WTC11 (cell line): ENCODE measurements at regions of chr16 and their contacts with region 1.

Region 1: DNA sequence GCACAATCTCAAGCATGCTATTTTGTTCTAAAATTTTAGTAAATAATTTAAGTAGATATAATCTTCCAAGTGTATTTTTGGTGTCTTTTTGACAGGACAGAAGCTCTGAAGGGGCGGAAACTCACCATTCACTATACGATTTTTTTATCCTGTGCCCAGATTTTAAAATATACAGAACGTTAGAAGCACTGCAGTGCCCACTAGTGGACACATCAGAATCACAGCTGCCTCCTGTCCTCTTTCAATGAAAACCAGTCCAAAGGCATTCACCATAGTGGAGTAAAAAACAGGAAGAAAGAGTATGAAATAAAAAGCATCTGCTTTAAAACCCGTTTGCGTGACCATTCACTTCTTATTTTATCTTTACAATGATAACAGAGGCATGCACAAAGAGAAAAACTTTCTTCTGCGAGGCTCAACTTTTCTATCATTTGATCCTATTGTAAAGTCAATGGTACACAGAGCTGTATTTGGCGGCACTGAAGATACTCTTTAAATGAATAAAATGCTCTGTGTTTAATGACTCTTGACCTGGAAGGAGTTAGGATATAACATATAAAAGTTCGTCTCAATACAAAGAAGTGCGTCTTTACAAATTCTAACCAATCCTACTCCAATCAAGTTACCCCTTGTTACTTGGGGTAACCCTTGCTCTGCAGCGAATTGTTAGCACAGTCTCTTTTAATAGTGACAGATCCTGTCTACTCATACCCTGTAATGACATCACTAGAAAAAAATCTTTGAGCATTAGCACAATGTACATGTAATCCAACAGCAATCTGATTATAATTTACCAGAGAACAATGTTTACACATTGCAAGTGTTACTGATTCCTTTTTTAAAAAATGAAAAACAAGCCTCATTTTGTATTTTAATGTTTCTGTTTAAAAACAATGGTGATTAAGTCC is 339.8 kb upstream of the PSMD7 start:
- DNase-seq: peak; percentile 73
- ATAC-seq: peak; percentile 67
- H3K4me3 Mint-ChIP-seq: no peak overlapping the region
- H3K27ac Mint-ChIP-seq: no peak overlapping the region
- H3K4me1 Mint-ChIP-seq: no peaks in the 10 kb centered on the region; the same call in 1 of the 2 replicates
- H3K27me3 Mint-ChIP-seq: no peaks in the 10 kb centered on the region; the same call in 1 of the 2 replicates
- CTCF ChIP-seq: peak; percentile 42; the same call in 1 of the 2 replicates

Region 2: DNA sequence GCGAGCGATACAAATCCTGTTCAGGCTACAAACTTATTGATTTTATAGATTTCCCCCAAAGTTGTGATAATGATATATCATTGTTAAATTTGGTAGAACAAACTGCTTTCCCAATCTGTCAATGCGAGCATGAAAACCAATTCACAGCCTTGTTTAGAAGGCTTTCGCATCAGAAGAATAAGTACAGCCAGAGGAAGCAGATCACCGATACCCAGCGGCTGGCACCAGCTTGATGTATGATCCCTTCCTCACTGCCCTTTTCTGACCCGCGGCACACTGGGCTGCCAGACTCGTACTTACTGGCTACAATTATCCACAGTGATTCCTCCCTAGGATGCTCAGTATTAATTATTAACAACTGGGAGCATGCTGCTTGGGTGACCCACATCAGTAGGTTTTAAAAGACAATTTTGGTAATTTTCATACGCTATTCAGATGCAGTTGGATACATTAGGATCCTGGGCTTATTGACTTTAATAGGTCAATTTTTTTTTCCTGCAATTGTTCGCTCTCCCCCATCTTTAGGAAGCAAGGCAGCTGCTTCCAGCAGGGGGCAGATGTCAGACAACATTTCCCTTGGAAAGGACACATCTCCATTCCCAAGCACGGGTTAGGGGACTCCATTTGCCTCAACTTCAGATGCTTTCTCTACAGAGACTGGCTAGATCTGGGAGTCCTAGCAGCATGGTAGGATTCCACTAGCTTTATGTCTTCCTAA is 242.9 kb before region 1 on chr16:
- CTCF ChIA-PET with region 1: interaction called, 10 read pairs
- POLR2A ChIA-PET with region 1: no interaction called
- DNase-seq: peak; percentile 69
- ATAC-seq: peak; percentile 58
- H3K4me3 Mint-ChIP-seq: no peak overlapping the region
- H3K27ac Mint-ChIP-seq: peak overlapping the region; percentile 61
- H3K4me1 Mint-ChIP-seq: peaks cover 71% of the 10 kb centered on the region
- H3K27me3 Mint-ChIP-seq: no peaks in the 10 kb centered on the region
- CTCF ChIP-seq: peak; percentile 56

Region 3: GRCh38 chr16:73743665-73744496 is 213.0 kb before region 1 on chr16:
- CTCF ChIA-PET with region 1: interaction called, 15 read pairs
- POLR2A ChIA-PET with region 1: no interaction called
- DNase-seq: peak; percentile 52
- ATAC-seq: peak; percentile 50
- H3K4me3 Mint-ChIP-seq: no peak overlapping the region
- H3K27ac Mint-ChIP-seq: no peak overlapping the region; the same call in 1 of the 2 replicates
- H3K4me1 Mint-ChIP-seq: peaks cover 12% of the 10 kb centered on the region
- H3K27me3 Mint-ChIP-seq: no peaks in the 10 kb centered on the region
- CTCF ChIP-seq: peak; percentile 36; the same call in 1 of the 2 replicates

Region 4: GRCh38 chr16:73846356-73846755 is 110.5 kb before region 1 on chr16:
- CTCF ChIA-PET with region 1: interaction called, 13 read pairs
- POLR2A ChIA-PET with region 1: no interaction called
- DNase-seq: peak; percentile 52
- ATAC-seq: peak; percentile 69; the same call in 1 of the 2 replicates
- H3K4me3 Mint-ChIP-seq: no peak overlapping the region
- H3K27ac Mint-ChIP-seq: no peak overlapping the region
- H3K4me1 Mint-ChIP-seq: peaks cover 14% of the 10 kb centered on the region
- H3K27me3 Mint-ChIP-seq: no peaks in the 10 kb centered on the region
- CTCF ChIP-seq: no peak

Region 5: GRCh38 chr16:73864868-73865267 is 92.0 kb before region 1 on chr16:
- CTCF ChIA-PET with region 1: no interaction called
- POLR2A ChIA-PET with region 1: no interaction called
- DNase-seq: no peak
- ATAC-seq: no peak
- H3K4me3 Mint-ChIP-seq: no peak overlapping the region
- H3K27ac Mint-ChIP-seq: no peak overlapping the region
- H3K4me1 Mint-ChIP-seq: peaks cover 7% of the 10 kb centered on the region
- H3K27me3 Mint-ChIP-seq: no peaks in the 10 kb centered on the region; the same call in 1 of the 2 replicates
- CTCF ChIP-seq: no peak

Region 6: DNA sequence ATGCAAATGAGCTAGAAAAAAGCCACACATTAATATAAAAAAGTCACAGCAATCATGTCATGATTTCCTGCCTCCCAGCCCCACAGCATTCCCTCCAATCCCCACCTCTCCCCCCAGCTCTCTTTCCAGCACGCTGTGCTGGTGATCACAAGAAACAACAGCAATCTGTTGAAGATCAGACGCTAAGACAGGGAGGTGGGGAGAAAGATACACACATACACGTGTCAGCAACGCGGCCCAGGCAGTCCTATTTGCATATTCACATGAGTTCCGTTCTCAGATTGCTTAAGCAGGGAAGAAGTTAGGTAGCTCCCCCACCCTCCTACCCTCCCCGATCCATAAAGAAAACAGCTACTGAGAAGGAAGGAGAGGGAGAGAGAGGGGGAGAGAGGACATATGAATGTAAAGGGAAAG is 65.7 kb before region 1 on chr16:
- CTCF ChIA-PET with region 1: interaction called, 16 read pairs
- POLR2A ChIA-PET with region 1: no interaction called
- DNase-seq: peak; percentile 41
- ATAC-seq: peak; percentile 80
- H3K4me3 Mint-ChIP-seq: peak overlapping the region; percentile 72
- H3K27ac Mint-ChIP-seq: peak overlapping the region; percentile 51
- H3K4me1 Mint-ChIP-seq: peaks cover 69% of the 10 kb centered on the region
- H3K27me3 Mint-ChIP-seq: peaks cover 9% of the 10 kb centered on the region; the same call in 1 of the 2 replicates
- CTCF ChIP-seq: no peak

Region 7: GRCh38 chr16:73921295-73921694 is 35.5 kb before region 1 on chr16:
- CTCF ChIA-PET with region 1: no interaction called
- POLR2A ChIA-PET with region 1: no interaction called
- DNase-seq: no peak
- ATAC-seq: no peak
- H3K4me3 Mint-ChIP-seq: no peak overlapping the region
- H3K27ac Mint-ChIP-seq: no peak overlapping the region
- H3K4me1 Mint-ChIP-seq: peaks cover 21% of the 10 kb centered on the region
- H3K27me3 Mint-ChIP-seq: no peaks in the 10 kb centered on the region
- CTCF ChIP-seq: no peak

Region 8: DNA sequence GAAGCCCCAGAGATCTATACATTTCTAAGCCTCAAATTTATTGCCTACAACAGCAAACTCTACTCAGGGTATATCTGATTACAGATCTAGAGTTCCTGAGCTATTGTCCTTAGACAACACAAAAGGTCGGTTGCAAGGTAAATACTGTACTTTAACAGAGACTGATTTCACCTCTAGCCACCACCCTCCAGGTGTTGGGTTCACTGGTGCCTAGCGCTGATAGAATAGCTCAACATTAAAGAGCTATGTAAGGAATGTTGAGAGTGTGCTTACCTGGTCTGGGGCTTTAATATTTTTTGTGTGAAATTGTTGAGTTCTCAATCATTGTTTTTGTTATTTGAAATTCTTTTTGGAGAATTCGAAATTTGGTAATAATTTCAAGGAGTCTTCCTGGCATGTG is 62.8 kb after region 1 on chr16:
- CTCF ChIA-PET with region 1: interaction called, 10 read pairs
- POLR2A ChIA-PET with region 1: no interaction called
- DNase-seq: no peak
- ATAC-seq: peak; percentile 99
- H3K4me3 Mint-ChIP-seq: no peak overlapping the region
- H3K27ac Mint-ChIP-seq: no peak overlapping the region
- H3K4me1 Mint-ChIP-seq: peaks cover 33% of the 10 kb centered on the region
- H3K27me3 Mint-ChIP-seq: peaks cover 11% of the 10 kb centered on the region
- CTCF ChIP-seq: no peak

Region 9: GRCh38 chr16:74107795-74108618 is 151.2 kb after region 1 on chr16:
- CTCF ChIA-PET with region 1: interaction called, 10 read pairs
- POLR2A ChIA-PET with region 1: no interaction called
- DNase-seq: peak; percentile 80
- ATAC-seq: peak; percentile 91
- H3K4me3 Mint-ChIP-seq: peak overlapping the region; percentile 21; the same call in 1 of the 2 replicates
- H3K27ac Mint-ChIP-seq: peak overlapping the region; percentile 66; the same call in 1 of the 2 replicates
- H3K4me1 Mint-ChIP-seq: peaks cover 15% of the 10 kb centered on the region
- H3K27me3 Mint-ChIP-seq: no peaks in the 10 kb centered on the region
- CTCF ChIP-seq: peak; percentile 79